ENCODE measurements at regions of chr17 and their contacts with region 1.

Region 1: DNA sequence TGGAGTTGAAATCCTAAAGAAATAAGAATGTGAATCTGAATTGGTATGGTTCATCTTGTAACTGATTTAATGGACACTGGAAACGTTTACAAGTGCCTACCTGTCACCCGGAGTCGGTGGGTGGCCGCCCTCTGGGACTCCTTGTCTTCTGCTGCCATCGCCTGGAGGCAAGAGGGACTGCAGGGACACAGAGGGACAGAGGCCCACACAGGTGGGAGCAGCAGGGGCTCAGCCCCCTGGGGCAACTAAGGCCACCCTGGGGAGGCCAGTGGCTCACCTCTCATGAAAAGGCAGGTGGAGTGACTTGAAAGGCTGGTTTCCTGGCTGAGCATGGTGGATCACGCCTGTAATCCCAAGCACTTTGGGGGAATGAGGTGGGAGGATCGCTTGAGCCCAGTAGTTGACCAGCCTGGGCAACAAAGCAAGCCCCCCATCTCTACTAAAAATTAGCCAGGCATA is 23.2 kb downstream of the TMEM92 start:
- DNase-seq: peak; percentile 58 to 82 (median 76)
- ATAC-seq: peak; percentile 98
- H3K4me3 ChIP-seq: no peak overlapping the region
- H3K4me3 Mint-ChIP-seq: no peak overlapping the region
- H3K27ac ChIP-seq: no peak overlapping the region
- H3K27ac Mint-ChIP-seq: no peak overlapping the region
- H3K4me1 ChIP-seq: no peaks in the 10 kb centered on the region
- H3K4me1 Mint-ChIP-seq: peaks cover 0 to 10% (median 0%) of the 10 kb centered on the region in 7 donors
- H3K27me3 ChIP-seq: no peaks in the 10 kb centered on the region
- H3K27me3 Mint-ChIP-seq: peaks cover 0 to 14% (median 5%) of the 10 kb centered on the region in 5 donors

Region 2: DNA sequence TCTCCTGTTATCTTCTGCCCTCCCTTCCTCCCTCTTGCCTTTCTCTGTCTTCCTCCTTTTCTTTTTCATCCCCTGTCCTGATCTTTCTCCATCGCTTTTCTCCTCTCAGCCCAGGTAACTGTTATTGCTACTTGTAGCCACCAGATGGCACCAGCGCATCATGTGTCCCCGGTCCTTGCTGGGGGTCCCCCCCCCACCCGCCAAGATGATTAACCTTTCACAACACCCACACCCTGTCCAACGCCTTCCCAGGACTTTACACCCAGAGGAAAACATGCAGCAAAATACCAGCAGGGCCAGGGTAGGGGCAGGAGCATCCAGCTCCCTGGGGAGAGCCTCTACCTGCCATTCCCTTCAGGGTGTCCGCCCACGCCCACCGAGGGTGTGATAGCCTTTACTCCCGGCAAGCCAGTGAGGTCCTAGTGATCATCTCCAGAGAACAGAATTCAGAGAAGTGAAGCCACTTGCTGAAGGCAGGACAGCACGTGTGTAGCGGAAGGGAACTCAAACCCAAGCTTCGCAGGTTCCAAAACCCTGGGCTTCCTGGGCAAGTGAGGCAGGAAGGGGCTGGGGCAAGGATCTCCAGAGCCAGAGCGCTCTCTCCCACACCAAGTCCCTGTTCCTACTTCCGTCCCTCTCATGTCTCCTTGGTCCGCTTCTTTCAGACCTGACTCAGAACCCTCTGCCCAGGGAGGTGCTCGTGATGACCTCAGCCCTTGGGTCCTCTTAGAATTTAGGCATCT is 436.1 kb before region 1 on chr17:
- CTCF ChIA-PET with region 1: no interaction called
- POLR2A ChIA-PET with region 1: no interaction called
- intact Hi-C with region 1: loop called in 1 of 2 experiments (anchors 2 kb)
- DNase-seq: peak in 8 of 9 donors; percentile 19 to 60 (median 42)
- ATAC-seq: peak; percentile 76
- H3K4me3 ChIP-seq: no peak overlapping the region
- H3K4me3 Mint-ChIP-seq: no peak overlapping the region
- H3K27ac ChIP-seq: no peak overlapping the region
- H3K27ac Mint-ChIP-seq: peak overlapping the region in 1 of 9 donors; percentile 4
- H3K4me1 ChIP-seq: no peaks in the 10 kb centered on the region
- H3K4me1 Mint-ChIP-seq: peaks cover 0 to 7% (median 5%) of the 10 kb centered on the region in 7 donors
- H3K27me3 ChIP-seq: no peaks in the 10 kb centered on the region
- H3K27me3 Mint-ChIP-seq: peaks cover 0 to 13% (median 6%) of the 10 kb centered on the region in 5 donors

Region 3: GRCh38 chr17:50026901-50027630 is 270.4 kb before region 1 on chr17:
- CTCF ChIA-PET with region 1: no interaction called
- POLR2A ChIA-PET with region 1: no interaction called
- intact Hi-C with region 1: loop called in 1 of 2 experiments (anchors 1 kb)
- DNase-seq: peak; percentile 33 to 81 (median 69)
- ATAC-seq: peak; percentile 80
- H3K4me3 ChIP-seq: no peak overlapping the region
- H3K4me3 Mint-ChIP-seq: peak overlapping the region in 7 of 10 donors; percentile 17 to 74 (median 54)
- H3K27ac ChIP-seq: no peak overlapping the region
- H3K27ac Mint-ChIP-seq: no peak overlapping the region
- H3K4me1 ChIP-seq: peaks cover 0 to 8% of the 10 kb centered on the region in 2 donors
- H3K4me1 Mint-ChIP-seq: peaks cover 5 to 13% (median 10%) of the 10 kb centered on the region in 7 donors
- H3K27me3 ChIP-seq: peaks cover 0 to 6% of the 10 kb centered on the region in 2 donors
- H3K27me3 Mint-ChIP-seq: peaks cover 20 to 33% (median 25%) of the 10 kb centered on the region in 5 donors

Region 4: GRCh38 chr17:50114849-50115357 is 182.5 kb before region 1 on chr17:
- CTCF ChIA-PET with region 1: no interaction called
- POLR2A ChIA-PET with region 1: no interaction called
- intact Hi-C with region 1: loop called in 1 of 2 experiments (anchors 1 kb)
- DNase-seq: peak in 6 of 9 donors; percentile 35 to 47 (median 41)
- ATAC-seq: peak; percentile 48
- H3K4me3 ChIP-seq: no peak overlapping the region
- H3K4me3 Mint-ChIP-seq: peak overlapping the region in 2 of 10 donors; percentile 5 to 32
- H3K27ac ChIP-seq: no peak overlapping the region
- H3K27ac Mint-ChIP-seq: peak overlapping the region in 2 of 9 donors; percentile 61 to 68
- H3K4me1 ChIP-seq: peaks cover 0 to 4% of the 10 kb centered on the region in 2 donors
- H3K4me1 Mint-ChIP-seq: peaks cover 7 to 18% (median 12%) of the 10 kb centered on the region in 7 donors
- H3K27me3 ChIP-seq: peaks cover 4 to 9% of the 10 kb centered on the region in 2 donors
- H3K27me3 Mint-ChIP-seq: peaks cover 14 to 44% (median 26%) of the 10 kb centered on the region in 5 donors

Region 5: GRCh38 chr17:50169121-50169764 is 128.2 kb before region 1 on chr17:
- CTCF ChIA-PET with region 1: interaction called, 4 read pairs
- POLR2A ChIA-PET with region 1: no interaction called
- intact Hi-C with region 1: loop called (anchors 1 kb)
- DNase-seq: peak; percentile 50 to 78 (median 71)
- ATAC-seq: peak; percentile 93
- H3K4me3 ChIP-seq: peak overlapping the region; percentile 52
- H3K4me3 Mint-ChIP-seq: peak overlapping the region; percentile 42 to 78 (median 62)
- H3K27ac ChIP-seq: peak overlapping the region; percentile 38
- H3K27ac Mint-ChIP-seq: peak overlapping the region; percentile 24 to 93 (median 79)
- H3K4me1 ChIP-seq: peaks cover 9 to 10% of the 10 kb centered on the region in 2 donors
- H3K4me1 Mint-ChIP-seq: peaks cover 11 to 14% (median 12%) of the 10 kb centered on the region in 7 donors
- H3K27me3 ChIP-seq: no peaks in the 10 kb centered on the region
- H3K27me3 Mint-ChIP-seq: no peaks in the 10 kb centered on the region

Region 6: GRCh38 chr17:50269477-50270434 is 27.7 kb before region 1 on chr17:
- CTCF ChIA-PET with region 1: interaction called, 4 read pairs
- POLR2A ChIA-PET with region 1: no interaction called
- intact Hi-C with region 1: loop called (anchors 1 kb)
- DNase-seq: peak in 8 of 9 donors; percentile 12 to 58 (median 35)
- ATAC-seq: peak; percentile 85
- H3K4me3 ChIP-seq: no peak overlapping the region
- H3K4me3 Mint-ChIP-seq: no peak overlapping the region
- H3K27ac ChIP-seq: no peak overlapping the region
- H3K27ac Mint-ChIP-seq: no peak overlapping the region
- H3K4me1 ChIP-seq: no peaks in the 10 kb centered on the region
- H3K4me1 Mint-ChIP-seq: peaks cover 5 to 14% (median 7%) of the 10 kb centered on the region in 7 donors
- H3K27me3 ChIP-seq: peaks cover 0 to 3% of the 10 kb centered on the region in 2 donors
- H3K27me3 Mint-ChIP-seq: peaks cover 13 to 22% (median 17%) of the 10 kb centered on the region in 5 donors

Region 7: GRCh38 chr17:50331085-50331791 is 33.8 kb after region 1 on chr17:
- CTCF ChIA-PET with region 1: no interaction called
- POLR2A ChIA-PET with region 1: no interaction called
- intact Hi-C with region 1: no loop called
- DNase-seq: no peak
- ATAC-seq: no peak
- H3K4me3 ChIP-seq: no peak overlapping the region
- H3K4me3 Mint-ChIP-seq: no peak overlapping the region
- H3K27ac ChIP-seq: no peak overlapping the region
- H3K27ac Mint-ChIP-seq: peak overlapping the region in 2 of 9 donors; percentile 23 to 67
- H3K4me1 ChIP-seq: no peaks in the 10 kb centered on the region
- H3K4me1 Mint-ChIP-seq: peaks cover 8 to 12% (median 10%) of the 10 kb centered on the region in 7 donors
- H3K27me3 ChIP-seq: no peaks in the 10 kb centered on the region
- H3K27me3 Mint-ChIP-seq: peaks cover 0 to 10% (median 5%) of the 10 kb centered on the region in 5 donors

Region 8: DNA sequence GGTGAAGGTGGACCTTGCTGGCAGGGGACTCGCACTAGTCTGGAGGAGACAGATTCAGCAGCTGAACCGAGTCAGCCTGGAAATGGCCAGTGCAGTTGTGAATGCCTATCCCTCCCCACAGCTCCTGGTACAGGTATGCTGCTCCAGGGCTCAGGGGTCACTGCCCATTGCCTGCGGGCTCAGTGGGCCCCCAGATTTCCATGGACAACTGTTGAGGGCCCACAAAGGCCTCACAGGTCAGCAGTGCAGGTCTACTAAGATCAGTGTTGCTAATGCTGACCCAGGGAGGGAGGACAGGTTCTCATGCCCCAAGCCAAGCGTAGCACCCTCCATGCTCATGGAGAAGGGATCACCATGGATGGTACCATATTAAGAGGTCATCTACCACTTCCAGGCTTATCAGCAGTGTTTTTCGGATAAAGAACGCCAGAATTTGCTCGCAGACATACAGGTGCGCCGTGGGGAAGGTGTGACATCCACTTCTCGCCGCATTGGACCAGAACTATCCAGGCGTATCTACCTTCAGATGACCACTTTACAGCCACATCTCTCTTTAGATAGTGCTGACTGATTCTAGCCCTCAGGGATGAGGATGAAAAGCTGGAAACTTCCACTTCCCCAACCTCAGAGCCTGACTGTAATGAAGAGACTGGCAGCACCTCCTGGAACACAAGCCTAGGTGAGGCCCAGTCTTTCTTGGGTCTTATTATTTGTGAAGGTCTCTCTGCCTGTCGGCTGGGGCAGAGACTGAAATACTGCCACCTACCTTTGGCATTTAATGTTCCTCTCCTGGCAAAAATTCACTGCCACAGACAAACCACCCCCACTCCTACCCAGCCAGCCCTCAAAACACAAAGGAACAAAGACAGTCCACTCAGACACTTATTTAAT is 83.2 kb after region 1 on chr17:
- CTCF ChIA-PET with region 1: no interaction called
- POLR2A ChIA-PET with region 1: no interaction called
- intact Hi-C with region 1: no loop called
- DNase-seq: no peak
- ATAC-seq: peak; percentile 17
- H3K4me3 ChIP-seq: no peak overlapping the region
- H3K4me3 Mint-ChIP-seq: no peak overlapping the region
- H3K27ac ChIP-seq: no peak overlapping the region
- H3K27ac Mint-ChIP-seq: no peak overlapping the region
- H3K4me1 ChIP-seq: no peaks in the 10 kb centered on the region
- H3K4me1 Mint-ChIP-seq: peaks cover 0 to 4% (median 0%) of the 10 kb centered on the region in 7 donors
- H3K27me3 ChIP-seq: no peaks in the 10 kb centered on the region
- H3K27me3 Mint-ChIP-seq: no peaks in the 10 kb centered on the region